SK-N-SH (cell line): ENCODE measurements at regions of chr1 and their contacts with region 1.

Region 1: DNA sequence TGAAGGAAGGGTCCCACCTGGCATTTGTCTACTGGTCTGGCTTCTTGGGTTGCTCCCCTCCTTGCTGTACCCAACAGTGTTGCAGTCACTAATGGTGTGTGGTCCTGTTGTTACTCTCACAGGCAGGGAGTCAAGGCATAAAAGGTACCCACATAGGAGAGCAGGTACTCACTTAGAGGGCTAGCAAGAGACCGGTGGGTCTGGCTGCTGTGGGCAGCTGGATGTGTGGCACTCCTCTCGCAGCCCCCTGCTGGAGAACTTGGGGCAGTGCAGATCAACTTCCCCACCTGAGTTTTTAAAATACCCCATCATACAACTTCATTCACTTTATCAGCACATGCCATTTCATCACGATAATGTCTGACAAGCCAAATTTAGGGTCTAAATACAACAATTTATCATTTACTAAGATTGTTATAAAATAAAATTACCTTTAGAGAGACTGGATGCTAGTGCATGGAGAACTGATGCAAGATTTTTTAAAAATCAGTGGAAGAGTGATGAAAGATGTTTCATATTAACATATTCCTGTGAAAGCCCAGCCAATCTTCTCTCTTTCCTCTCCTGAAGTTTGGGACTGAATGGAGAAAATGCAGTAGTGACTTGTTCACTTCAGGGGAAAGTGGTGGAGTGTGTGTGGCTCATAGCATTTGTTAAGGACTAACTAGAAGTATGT is 42.8 kb downstream of the ACP6 start:
- DNase-seq: peak; percentile 83
- H3K4me3 ChIP-seq: no peak overlapping the region
- H3K27ac ChIP-seq: no peak overlapping the region
- H3K4me1 ChIP-seq: no peaks in the 10 kb centered on the region
- H3K27me3 ChIP-seq: no peaks in the 10 kb centered on the region
- CTCF ChIP-seq: peak; percentile 94
- EP300 ChIP-seq: no peak
- RAD21 ChIP-seq: peak; percentile 76

Region 2: DNA sequence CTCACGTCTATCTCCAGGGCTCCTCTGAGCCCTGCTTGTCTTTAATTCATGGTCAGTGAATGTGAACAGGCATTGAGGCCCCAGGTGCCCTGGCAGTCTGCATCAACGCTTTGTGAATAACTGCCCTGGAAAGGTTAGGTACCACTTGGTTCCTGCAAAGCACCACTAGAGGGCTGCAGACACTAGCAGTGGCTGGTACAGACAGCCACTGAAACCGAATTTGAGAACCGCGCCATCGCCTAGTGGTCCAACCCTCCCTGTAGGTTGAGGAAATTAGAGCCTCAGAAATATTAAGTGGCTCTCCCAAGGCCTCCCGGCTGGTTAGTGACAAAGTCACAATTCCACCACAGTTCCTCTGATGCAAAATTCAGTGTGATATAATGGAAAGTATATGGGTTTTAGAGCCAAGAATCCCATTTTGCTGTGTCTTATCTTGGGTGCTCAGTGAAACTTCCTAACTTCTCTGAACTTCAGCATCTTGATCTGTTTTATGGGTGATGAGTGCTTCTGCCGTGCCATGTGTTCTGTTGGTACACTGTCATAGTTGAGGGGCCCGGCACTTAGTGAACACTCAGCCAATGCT is 132.5 kb before region 1 on chr1:
- CTCF ChIA-PET with region 1: interaction called, 27 read pairs
- POLR2A ChIA-PET with region 1: no interaction called
- DNase-seq: peak; percentile 65
- H3K4me3 ChIP-seq: no peak overlapping the region; a peak in 1 of 4 replicates
- H3K27ac ChIP-seq: no peak overlapping the region
- H3K4me1 ChIP-seq: no peaks in the 10 kb centered on the region; a peak in 1 of 4 replicates
- H3K27me3 ChIP-seq: no peaks in the 10 kb centered on the region; the same call in 1 of the 2 replicates
- CTCF ChIP-seq: peak; percentile 96
- EP300 ChIP-seq: no peak
- RAD21 ChIP-seq: peak; percentile 99

Region 3: DNA sequence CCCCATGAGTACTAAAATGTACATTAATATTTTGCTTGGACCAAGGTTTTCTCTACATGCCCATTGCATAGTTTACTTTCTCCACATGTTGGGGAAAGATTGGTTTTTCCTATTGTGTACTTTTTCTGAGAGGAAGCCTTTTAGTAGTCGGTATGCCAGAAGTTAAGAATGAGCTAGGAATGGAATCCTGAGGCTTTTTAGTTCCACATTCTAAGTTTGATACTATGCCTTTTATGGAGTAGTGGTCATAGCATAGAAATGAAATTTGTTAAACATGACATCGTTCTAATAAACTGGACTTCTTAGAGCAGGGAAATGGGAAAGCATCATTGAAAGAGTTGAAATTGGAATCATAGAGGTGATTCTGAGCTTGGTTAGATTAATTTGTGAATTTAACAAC is 22.0 kb before region 1 on chr1:
- CTCF ChIA-PET with region 1: interaction called, 21 read pairs
- POLR2A ChIA-PET with region 1: no interaction called
- DNase-seq: no peak
- H3K4me3 ChIP-seq: no peak overlapping the region
- H3K27ac ChIP-seq: no peak overlapping the region
- H3K4me1 ChIP-seq: peaks cover 0 to 7% of the 10 kb centered on the region in 2 experiments; a peak in 2 of 4 replicates
- H3K27me3 ChIP-seq: no peaks in the 10 kb centered on the region
- CTCF ChIP-seq: no peak
- EP300 ChIP-seq: no peak
- RAD21 ChIP-seq: no peak

Region 4: GRCh38 chr1:147611021-147611426 is 16.5 kb before region 1 on chr1:
- CTCF ChIA-PET with region 1: interaction called, 21 read pairs
- POLR2A ChIA-PET with region 1: no interaction called
- DNase-seq: no peak
- H3K4me3 ChIP-seq: no peak overlapping the region
- H3K27ac ChIP-seq: no peak overlapping the region
- H3K4me1 ChIP-seq: peaks cover 0 to 11% of the 10 kb centered on the region in 2 experiments; a peak in 2 of 4 replicates
- H3K27me3 ChIP-seq: no peaks in the 10 kb centered on the region
- CTCF ChIP-seq: no peak
- EP300 ChIP-seq: no peak
- RAD21 ChIP-seq: no peak

Region 5: GRCh38 chr1:147640553-147641165 is 13.1 kb after region 1 on chr1:
- CTCF ChIA-PET with region 1: interaction called, 34 read pairs
- POLR2A ChIA-PET with region 1: no interaction called
- DNase-seq: peak; percentile 68
- H3K4me3 ChIP-seq: no peak overlapping the region
- H3K27ac ChIP-seq: no peak overlapping the region
- H3K4me1 ChIP-seq: no peaks in the 10 kb centered on the region; a peak in 1 of 4 replicates
- H3K27me3 ChIP-seq: no peaks in the 10 kb centered on the region
- CTCF ChIP-seq: peak; percentile 77
- EP300 ChIP-seq: no peak
- RAD21 ChIP-seq: peak; percentile 41